ENCODE measurements at regions of chr2 and their contacts with region 1.

Region 1: GRCh38 chr2:181742922-181743722 is 62.8 kb upstream of the NEUROD1 start:
- DNase-seq: no peak
- H3K4me3 ChIP-seq: no peak overlapping the region
- H3K27me3 ChIP-seq: no peaks in the 10 kb centered on the region
- CTCF ChIP-seq: peak; percentile 61

Region 2: GRCh38 chr2:181904022-181904632 is 161.0 kb after region 1 on chr2:
- CTCF ChIA-PET with region 1: interaction called, 11 read pairs
- POLR2A ChIA-PET with region 1: no interaction called
- DNase-seq: no peak
- H3K4me3 ChIP-seq: no peak overlapping the region
- H3K27me3 ChIP-seq: no peaks in the 10 kb centered on the region
- CTCF ChIP-seq: peak; percentile 51

Region 3: GRCh38 chr2:181953881-181954537 is 210.9 kb after region 1 on chr2:
- CTCF ChIA-PET with region 1: interaction called, 13 read pairs
- POLR2A ChIA-PET with region 1: no interaction called
- DNase-seq: no peak
- H3K4me3 ChIP-seq: peak overlapping the region; percentile 28
- H3K27me3 ChIP-seq: no peaks in the 10 kb centered on the region
- CTCF ChIP-seq: peak; percentile 65

Region 4: GRCh38 chr2:182077451-182078142 is 334.5 kb after region 1 on chr2:
- CTCF ChIA-PET with region 1: interaction called, 19 read pairs
- POLR2A ChIA-PET with region 1: no interaction called
- DNase-seq: peak; percentile 40
- H3K4me3 ChIP-seq: no peak overlapping the region
- H3K27me3 ChIP-seq: no peaks in the 10 kb centered on the region
- CTCF ChIP-seq: peak; percentile 64